ENCODE measurements at regions of chr1 and their contacts with region 1.

Region 1: DNA sequence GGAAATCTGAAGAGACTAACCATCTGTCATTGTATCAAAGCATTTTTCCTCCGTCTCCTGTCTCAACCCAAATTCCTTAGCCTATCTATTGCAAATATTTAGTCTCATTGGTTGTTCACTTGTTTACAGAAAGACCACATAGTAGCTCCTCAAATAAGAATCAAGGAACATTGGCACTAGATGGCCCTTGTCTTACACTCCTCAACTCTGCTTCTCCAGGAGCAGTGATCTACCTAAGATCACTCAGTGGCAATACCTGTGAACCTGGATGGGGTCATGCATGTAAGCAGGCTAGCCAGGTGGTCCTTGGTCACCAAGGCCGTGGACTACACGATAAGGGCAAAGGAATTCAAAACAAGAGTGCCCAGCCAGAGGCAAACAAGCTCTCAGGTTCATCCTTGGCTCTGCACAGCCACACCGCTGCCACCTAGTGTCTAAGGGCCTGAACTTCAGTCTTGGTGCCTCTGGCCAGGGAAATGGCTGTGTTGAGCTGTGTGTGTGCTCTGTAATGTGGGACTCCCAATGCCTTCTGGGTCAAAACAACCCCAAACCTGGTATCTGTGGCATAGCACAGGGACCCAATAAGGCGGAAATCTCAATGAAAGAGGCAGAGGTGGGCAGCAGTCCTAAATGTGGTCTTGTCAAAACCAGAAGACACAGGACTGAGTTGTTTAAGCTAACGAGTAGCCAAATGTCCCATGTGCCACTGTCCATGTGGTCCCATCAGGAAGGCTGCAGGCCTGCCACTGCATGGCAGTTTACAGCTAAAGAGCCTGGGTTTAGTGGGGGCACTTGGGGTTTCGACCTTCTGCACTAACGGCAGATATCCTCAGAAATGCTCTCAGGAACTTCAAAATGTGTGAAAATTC is 54.5 kb downstream of the GPR161 start:
- DNase-seq: peak; percentile 80
- ATAC-seq: peak; percentile 86
- H3K4me3 Mint-ChIP-seq: no peak overlapping the region
- H3K27ac Mint-ChIP-seq: no peak overlapping the region
- H3K4me1 Mint-ChIP-seq: peaks cover 4% of the 10 kb centered on the region
- H3K27me3 Mint-ChIP-seq: no peaks in the 10 kb centered on the region

Region 2: GRCh38 chr1:167715157-167715999 is 366.9 kb before region 1 on chr1:
- CTCF ChIA-PET with region 1: interaction called, 24 read pairs
- POLR2A ChIA-PET with region 1: interaction called, 3 read pairs
- DNase-seq: peak; percentile 94
- ATAC-seq: peak; percentile 54
- H3K4me3 Mint-ChIP-seq: peak overlapping the region; percentile 91
- H3K27ac Mint-ChIP-seq: peak overlapping the region; percentile 96
- H3K4me1 Mint-ChIP-seq: peaks cover 34% of the 10 kb centered on the region
- H3K27me3 Mint-ChIP-seq: peaks cover 11% of the 10 kb centered on the region

Region 3: GRCh38 chr1:167839009-167839408 is 243.2 kb before region 1 on chr1:
- CTCF ChIA-PET with region 1: no interaction called
- POLR2A ChIA-PET with region 1: no interaction called
- DNase-seq: no peak
- ATAC-seq: no peak
- H3K4me3 Mint-ChIP-seq: no peak overlapping the region
- H3K27ac Mint-ChIP-seq: no peak overlapping the region
- H3K4me1 Mint-ChIP-seq: peaks cover 15% of the 10 kb centered on the region
- H3K27me3 Mint-ChIP-seq: peaks cover 16% of the 10 kb centered on the region

Region 4: DNA sequence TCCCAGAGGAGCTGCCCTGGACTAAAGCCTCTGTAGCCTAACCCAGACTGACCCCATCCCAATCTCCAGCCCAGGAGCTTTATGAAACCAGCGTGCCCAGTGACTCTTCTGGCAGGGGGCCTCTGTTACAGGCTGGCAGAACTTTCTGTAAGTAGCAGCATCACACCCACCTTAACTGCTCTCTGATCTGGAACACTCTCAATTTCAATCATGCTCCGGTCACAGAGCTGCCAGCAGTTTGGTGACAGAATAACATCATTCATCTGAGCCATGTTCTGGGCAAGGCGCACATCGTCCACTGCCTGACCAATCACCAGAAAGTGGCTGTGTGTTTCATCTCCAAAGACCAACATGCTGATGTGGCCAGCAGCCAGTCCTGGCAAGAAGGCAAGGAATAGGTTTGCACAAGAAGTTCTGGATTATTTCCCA is 183.0 kb before region 1 on chr1:
- CTCF ChIA-PET with region 1: no interaction called
- POLR2A ChIA-PET with region 1: no interaction called
- DNase-seq: no peak
- ATAC-seq: no peak
- H3K4me3 Mint-ChIP-seq: no peak overlapping the region
- H3K27ac Mint-ChIP-seq: no peak overlapping the region
- H3K4me1 Mint-ChIP-seq: peaks cover 2% of the 10 kb centered on the region
- H3K27me3 Mint-ChIP-seq: peaks cover 4% of the 10 kb centered on the region

Region 5: GRCh38 chr1:167936068-167936929 is 145.9 kb before region 1 on chr1 and contains the start of gene DCAF6:
- CTCF ChIA-PET with region 1: interaction called, 33 read pairs
- POLR2A ChIA-PET with region 1: no interaction called
- DNase-seq: peak; percentile 98
- ATAC-seq: peak; percentile 82
- H3K4me3 Mint-ChIP-seq: peak within 1 kb of the TSS; percentile 84
- H3K27ac Mint-ChIP-seq: peak within 1 kb of the TSS; percentile 95
- H3K4me1 Mint-ChIP-seq: peaks cover 33% of the 10 kb centered on the region
- H3K27me3 Mint-ChIP-seq: no peaks in the 10 kb centered on the region
- total RNA-seq, gene DCAF6: 22.6 to 25.1 TPM

Region 6: DNA sequence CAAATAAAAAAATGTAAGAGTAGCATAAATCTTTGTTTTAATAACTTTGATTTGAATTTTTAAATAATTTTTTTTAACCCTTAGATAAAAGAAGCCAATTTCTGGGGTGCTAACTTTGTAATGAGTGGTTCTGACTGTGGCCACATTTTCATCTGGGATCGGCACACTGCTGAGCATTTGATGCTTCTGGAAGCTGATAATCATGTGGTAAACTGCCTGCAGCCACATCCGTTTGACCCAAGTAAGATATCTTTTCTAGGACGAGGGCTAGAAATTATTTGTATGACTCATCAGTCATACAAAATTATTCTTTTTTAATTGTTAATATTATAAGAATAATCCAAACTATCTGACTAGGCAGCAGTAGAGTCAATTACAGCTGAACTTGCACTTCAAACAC is 16.7 kb before region 1 on chr1:
- CTCF ChIA-PET with region 1: interaction called, 67 read pairs
- POLR2A ChIA-PET with region 1: no interaction called
- DNase-seq: no peak
- ATAC-seq: no peak
- H3K4me3 Mint-ChIP-seq: no peak overlapping the region
- H3K27ac Mint-ChIP-seq: no peak overlapping the region
- H3K4me1 Mint-ChIP-seq: no peaks in the 10 kb centered on the region
- H3K27me3 Mint-ChIP-seq: no peaks in the 10 kb centered on the region

Region 7: GRCh38 chr1:168170564-168171508 is 88.6 kb after region 1 on chr1:
- CTCF ChIA-PET with region 1: no interaction called
- POLR2A ChIA-PET with region 1: no interaction called
- DNase-seq: no peak
- ATAC-seq: no peak
- H3K4me3 Mint-ChIP-seq: no peak overlapping the region
- H3K27ac Mint-ChIP-seq: no peak overlapping the region
- H3K4me1 Mint-ChIP-seq: no peaks in the 10 kb centered on the region
- H3K27me3 Mint-ChIP-seq: peaks cover 2% of the 10 kb centered on the region

Region 8: GRCh38 chr1:168521401-168522000 is 439.3 kb after region 1 on chr1:
- CTCF ChIA-PET with region 1: no interaction called
- POLR2A ChIA-PET with region 1: no interaction called
- DNase-seq: peak; percentile 69
- ATAC-seq: peak; percentile 58
- H3K4me3 Mint-ChIP-seq: peak overlapping the region; percentile 80
- H3K27ac Mint-ChIP-seq: peak overlapping the region; percentile 91
- H3K4me1 Mint-ChIP-seq: peaks cover 71% of the 10 kb centered on the region
- H3K27me3 Mint-ChIP-seq: no peaks in the 10 kb centered on the region

Measured in activated CD8-positive, alpha-beta T cell treated with anti-CD3 and anti-CD28 coated beads, Interleukin-2, amount 10 ng/mL, durations not matched to agents 7 days and 5 days (primary cell).